Lower leg skin (tissue), 4 donors: ENCODE measurements at regions of chr10 and their contacts with region 1.

Region 1: GRCh38 chr10:25222085-25222660 is 47.4 kb downstream of the GPR158 start:
- DNase-seq: no peak
- H3K4me3 ChIP-seq: no peak overlapping the region
- CTCF ChIP-seq: no peak
- POLR2A ChIP-seq: no peak

Region 2: GRCh38 chr10:25232204-25232603 is 10.0 kb after region 1 on chr10:
- intact Hi-C with region 1: loop called (anchors 1 kb)
- DNase-seq: no peak
- H3K4me3 ChIP-seq: no peak overlapping the region
- CTCF ChIP-seq: no peak
- POLR2A ChIP-seq: no peak